Caco-2 (cell line): ENCODE measurements at regions of chr1 and their contacts with region 1.

Region 1: GRCh38 chr1:172745014-172745413 is 86.1 kb downstream of the FASLG start:
- DNase-seq: peak; percentile 38 to 61
- H3K4me3 ChIP-seq: no peak overlapping the region
- H3K4me3 Mint-ChIP-seq: no peak overlapping the region
- H3K27ac Mint-ChIP-seq: no peak overlapping the region
- H3K4me1 ChIP-seq: peaks cover 10% of the 10 kb centered on the region
- H3K4me1 Mint-ChIP-seq: no peaks in the 10 kb centered on the region
- H3K27me3 ChIP-seq: no peaks in the 10 kb centered on the region
- H3K27me3 Mint-ChIP-seq: peaks cover 2% of the 10 kb centered on the region
- CTCF ChIP-seq: peak; percentile 62 to 63

Region 2: GRCh38 chr1:172778456-172779455 is 33.7 kb after region 1 on chr1:
- CTCF ChIA-PET with region 1: no interaction called
- POLR2A ChIA-PET with region 1: no interaction called
- intact Hi-C with region 1: loop called (anchors 2 kb)
- DNase-seq: no peak
- H3K4me3 ChIP-seq: no peak overlapping the region
- H3K4me3 Mint-ChIP-seq: no peak overlapping the region
- H3K27ac Mint-ChIP-seq: no peak overlapping the region
- H3K4me1 ChIP-seq: no peaks in the 10 kb centered on the region
- H3K4me1 Mint-ChIP-seq: no peaks in the 10 kb centered on the region
- H3K27me3 ChIP-seq: no peaks in the 10 kb centered on the region
- H3K27me3 Mint-ChIP-seq: no peaks in the 10 kb centered on the region
- CTCF ChIP-seq: peak in 1 of 2 experiments; percentile 1

Region 3: GRCh38 chr1:172976222-172977041 is 231.4 kb after region 1 on chr1:
- CTCF ChIA-PET with region 1: no interaction called
- POLR2A ChIA-PET with region 1: no interaction called
- intact Hi-C with region 1: loop called (anchors 10 kb)
- DNase-seq: peak; percentile 67 to 71
- H3K4me3 ChIP-seq: no peak overlapping the region
- H3K4me3 Mint-ChIP-seq: peak overlapping the region; percentile 15
- H3K27ac Mint-ChIP-seq: peak overlapping the region; percentile 64
- H3K4me1 ChIP-seq: peaks cover 31% of the 10 kb centered on the region
- H3K4me1 Mint-ChIP-seq: peaks cover 35% of the 10 kb centered on the region
- H3K27me3 ChIP-seq: no peaks in the 10 kb centered on the region
- H3K27me3 Mint-ChIP-seq: no peaks in the 10 kb centered on the region
- CTCF ChIP-seq: no peak

Region 4: GRCh38 chr1:173064011-173064410 is 319.0 kb after region 1 on chr1:
- CTCF ChIA-PET with region 1: no interaction called
- POLR2A ChIA-PET with region 1: no interaction called
- intact Hi-C with region 1: no loop called
- DNase-seq: no peak
- H3K4me3 ChIP-seq: no peak overlapping the region
- H3K4me3 Mint-ChIP-seq: no peak overlapping the region
- H3K27ac Mint-ChIP-seq: no peak overlapping the region
- H3K4me1 ChIP-seq: peaks cover 7% of the 10 kb centered on the region
- H3K4me1 Mint-ChIP-seq: no peaks in the 10 kb centered on the region
- H3K27me3 ChIP-seq: no peaks in the 10 kb centered on the region
- H3K27me3 Mint-ChIP-seq: no peaks in the 10 kb centered on the region
- CTCF ChIP-seq: no peak

Region 5: DNA sequence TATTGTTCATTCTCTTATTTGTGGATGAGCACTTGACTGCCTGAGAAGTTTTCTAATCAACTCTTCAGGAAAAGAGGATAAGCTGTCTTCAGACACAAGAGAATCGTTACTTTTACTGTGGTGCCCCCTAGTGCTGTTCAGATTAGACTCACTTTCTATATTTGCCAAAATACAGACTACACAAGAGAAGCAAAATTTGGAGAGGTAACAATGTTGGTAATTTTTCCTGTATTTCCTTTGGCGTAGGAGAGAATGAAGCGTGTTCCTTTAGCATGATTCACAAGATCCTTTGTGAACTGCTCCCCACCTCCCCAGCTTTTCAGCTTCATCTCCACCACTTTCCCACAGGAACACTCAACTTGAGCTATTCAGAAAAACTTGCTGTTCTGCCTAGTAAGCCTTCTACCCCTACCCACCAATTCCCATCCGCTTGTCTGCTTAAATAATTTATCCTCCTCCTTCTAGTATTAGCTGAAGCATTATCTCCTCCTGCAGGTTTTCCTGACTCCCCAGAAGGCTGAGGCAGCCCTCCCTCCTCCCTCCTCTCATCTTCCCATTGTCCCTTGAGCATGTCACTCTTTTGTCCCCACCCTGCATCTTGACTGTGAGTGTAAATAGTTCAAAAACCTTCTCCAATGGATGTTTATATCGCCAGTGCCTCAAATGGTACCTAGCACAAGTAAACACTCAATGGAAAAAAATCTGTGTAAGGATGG is 457.6 kb after region 1 on chr1:
- CTCF ChIA-PET with region 1: no interaction called
- POLR2A ChIA-PET with region 1: no interaction called
- intact Hi-C with region 1: loop called (anchors 1 kb)
- DNase-seq: peak in 1 of 2 experiments; percentile 53
- H3K4me3 ChIP-seq: no peak overlapping the region
- H3K4me3 Mint-ChIP-seq: no peak overlapping the region
- H3K27ac Mint-ChIP-seq: no peak overlapping the region
- H3K4me1 ChIP-seq: no peaks in the 10 kb centered on the region
- H3K4me1 Mint-ChIP-seq: no peaks in the 10 kb centered on the region
- H3K27me3 ChIP-seq: no peaks in the 10 kb centered on the region
- H3K27me3 Mint-ChIP-seq: no peaks in the 10 kb centered on the region
- CTCF ChIP-seq: peak; percentile 65 to 66

Region 6: GRCh38 chr1:173420330-173420806 is 675.4 kb after region 1 on chr1:
- CTCF ChIA-PET with region 1: no interaction called
- POLR2A ChIA-PET with region 1: no interaction called
- intact Hi-C with region 1: loop called (anchors 1 kb)
- DNase-seq: peak; percentile 61 to 73
- H3K4me3 ChIP-seq: no peak overlapping the region
- H3K4me3 Mint-ChIP-seq: no peak overlapping the region
- H3K27ac Mint-ChIP-seq: no peak overlapping the region
- H3K4me1 ChIP-seq: peaks cover 21% of the 10 kb centered on the region
- H3K4me1 Mint-ChIP-seq: peaks cover 22% of the 10 kb centered on the region
- H3K27me3 ChIP-seq: no peaks in the 10 kb centered on the region
- H3K27me3 Mint-ChIP-seq: no peaks in the 10 kb centered on the region
- CTCF ChIP-seq: peak; percentile 69 to 85

Region 7: GRCh38 chr1:174743654-174744561 is 1998.9 kb after region 1 on chr1:
- CTCF ChIA-PET with region 1: no interaction called
- POLR2A ChIA-PET with region 1: no interaction called
- intact Hi-C with region 1: loop called (anchors 10 kb)
- DNase-seq: no peak
- H3K4me3 ChIP-seq: no peak overlapping the region
- H3K4me3 Mint-ChIP-seq: no peak overlapping the region
- H3K27ac Mint-ChIP-seq: no peak overlapping the region
- H3K4me1 ChIP-seq: no peaks in the 10 kb centered on the region
- H3K4me1 Mint-ChIP-seq: no peaks in the 10 kb centered on the region
- H3K27me3 ChIP-seq: no peaks in the 10 kb centered on the region
- H3K27me3 Mint-ChIP-seq: no peaks in the 10 kb centered on the region
- CTCF ChIP-seq: peak in 1 of 2 experiments; percentile 63